ENCODE measurements at regions of chr4 and their contacts with region 1.

Region 1: DNA sequence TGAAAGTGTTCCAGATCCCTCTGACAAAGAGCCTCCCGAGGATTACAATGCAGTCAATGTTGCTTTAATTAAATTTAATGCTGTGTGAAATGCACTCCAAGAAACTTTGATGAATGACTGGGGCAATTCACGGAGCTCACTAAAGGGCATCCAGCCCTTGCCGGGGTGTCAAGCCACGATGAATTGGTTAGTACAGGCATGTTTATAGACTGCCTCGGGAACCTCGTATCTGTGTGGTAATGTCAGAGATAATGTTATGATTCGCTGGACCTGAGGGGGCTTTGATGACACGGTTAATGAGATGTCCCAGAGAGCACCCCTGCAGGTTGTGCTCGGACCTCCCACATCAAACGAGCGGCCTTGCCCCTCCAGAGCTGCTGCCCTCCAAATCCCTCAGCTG is 428.8 kb downstream of the NKX6-1 start:
- DNase-seq: no peak
- ATAC-seq: no peak

Region 2: DNA sequence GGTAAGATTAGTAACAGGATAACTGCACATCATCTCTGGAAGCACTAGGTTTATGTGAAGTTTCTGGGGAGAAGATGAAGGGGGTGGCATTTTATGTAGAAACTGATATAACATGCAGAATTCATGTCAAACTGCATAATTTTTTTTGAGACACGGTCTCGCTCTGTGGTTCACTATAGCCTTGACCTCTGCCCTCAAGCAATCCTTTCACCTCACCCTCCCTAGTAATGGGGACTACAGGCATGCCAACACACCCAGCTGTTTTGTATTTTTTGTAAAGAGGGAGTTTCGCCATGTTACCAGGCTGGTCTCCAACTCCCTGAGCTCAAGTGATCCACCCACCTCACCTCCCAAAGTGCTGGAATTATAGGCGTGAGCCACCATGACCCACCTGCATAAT is 596.9 kb before region 1 on chr4:
- intact Hi-C with region 1: loop called (anchors 5 kb)
- DNase-seq: no peak
- ATAC-seq: no peak

Region 3: GRCh38 chr4:84814094-84814750 is 743.9 kb after region 1 on chr4:
- intact Hi-C with region 1: no loop called
- DNase-seq: no peak
- ATAC-seq: no peak

Measured in sciatic nerve (tissue), 2 donors.